Upper lobe of right lung (tissue), 1 donor: ENCODE measurements at regions of chr17 and their contacts with region 1.

Region 1: GRCh38 chr17:49575579-49576087 is at the start of gene NXPH3:
- DNase-seq: peak; percentile 87
- ATAC-seq: peak; percentile 87
- H3K4me3 ChIP-seq: peak within 1 kb of the TSS; percentile 66
- H3K27ac ChIP-seq: peak within 1 kb of the TSS; percentile 43
- H3K4me1 ChIP-seq: peaks cover 28% of the 10 kb centered on the region
- H3K27me3 ChIP-seq: peaks cover 7% of the 10 kb centered on the region
- CTCF ChIP-seq: peak; percentile 30
- total RNA-seq, gene NXPH3: 6.3 TPM

Region 2: DNA sequence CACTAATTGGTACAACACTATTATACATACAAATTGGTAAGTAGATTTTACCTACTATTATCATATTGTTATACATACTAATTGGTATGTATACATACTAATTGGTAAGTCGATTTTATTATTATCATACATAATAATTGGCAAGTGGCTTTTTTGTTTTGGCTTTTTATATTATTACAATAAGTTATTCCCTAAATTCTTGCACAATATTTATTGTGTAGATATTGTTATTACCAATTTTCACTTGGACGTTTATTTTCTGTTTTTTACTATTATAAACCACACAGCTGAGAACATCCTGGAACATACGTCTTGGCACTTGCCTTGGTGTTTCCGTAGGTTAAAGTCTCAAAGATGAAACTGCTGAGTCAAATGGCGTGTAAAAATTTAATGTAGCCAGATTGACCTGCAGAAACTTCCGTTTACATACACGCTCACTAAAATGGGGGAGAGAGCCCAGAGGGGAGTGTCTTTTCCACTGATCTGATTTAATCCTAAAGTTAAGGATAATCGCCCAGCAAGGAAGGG is 384.2 kb before region 1 on chr17:
- intact Hi-C with region 1: no loop called
- DNase-seq: no peak
- ATAC-seq: no peak
- H3K4me3 ChIP-seq: peak overlapping the region; percentile 64
- H3K27ac ChIP-seq: peak overlapping the region; percentile 90
- H3K4me1 ChIP-seq: no peaks in the 10 kb centered on the region
- H3K27me3 ChIP-seq: no peaks in the 10 kb centered on the region
- CTCF ChIP-seq: no peak

Region 3: DNA sequence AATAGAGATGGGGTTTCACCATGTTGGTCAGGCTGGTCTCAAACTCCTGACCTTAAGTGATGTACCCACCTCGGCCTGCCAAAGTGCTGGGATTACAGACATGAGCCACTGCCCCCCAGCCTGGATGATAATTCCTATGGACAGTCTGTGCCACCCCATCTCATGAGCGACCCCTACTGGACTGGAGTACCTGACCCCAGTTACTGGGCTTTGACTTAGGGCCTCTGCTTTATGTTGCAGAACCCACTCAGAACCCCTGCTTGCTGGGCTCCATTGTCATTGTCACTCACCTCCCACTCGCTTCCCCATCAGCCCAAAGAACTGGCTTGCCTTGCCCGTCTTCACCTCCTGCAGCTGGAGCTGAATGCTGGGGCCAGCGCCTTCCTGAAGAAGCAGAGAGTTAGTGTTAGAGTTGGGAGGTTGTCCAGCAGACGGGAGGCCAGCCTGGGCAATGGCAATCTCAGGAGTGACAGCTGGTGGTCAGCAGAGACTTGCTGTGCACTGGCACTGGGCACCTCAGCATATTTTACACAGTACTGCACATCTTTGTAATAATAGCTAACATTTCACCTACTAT is 268.2 kb after region 1 on chr17:
- intact Hi-C with region 1: loop called (anchors 10 kb)
- DNase-seq: peak; percentile 59
- ATAC-seq: peak; percentile 31
- H3K4me3 ChIP-seq: no peak overlapping the region
- H3K27ac ChIP-seq: no peak overlapping the region
- H3K4me1 ChIP-seq: peaks cover 14% of the 10 kb centered on the region
- H3K27me3 ChIP-seq: no peaks in the 10 kb centered on the region
- CTCF ChIP-seq: peak; percentile 29